GM12878 (cell line): ENCODE measurements at regions of chr15 and their contacts with region 1.

Region 1: DNA sequence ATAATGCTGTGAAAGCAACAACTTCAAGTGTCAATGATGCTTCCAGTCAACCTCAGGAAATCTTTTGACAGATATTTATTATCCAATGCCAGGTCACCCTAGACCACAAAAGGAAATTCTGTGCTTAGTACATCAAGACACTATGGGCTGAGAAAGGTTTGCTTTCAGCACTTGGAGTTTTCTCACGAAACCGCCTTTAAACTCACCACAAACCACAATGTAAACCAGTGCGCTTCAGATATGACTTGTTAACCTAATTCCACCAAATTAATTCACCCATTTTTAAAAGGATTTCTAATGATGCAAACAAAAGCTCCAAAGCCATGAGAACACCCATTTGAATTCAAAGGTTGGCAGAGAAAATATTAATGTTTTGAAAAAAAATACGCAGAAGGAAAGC is 292.9 kb upstream of the NR2F2 start:
- DNase-seq: peak; percentile 93
- ATAC-seq: peak; percentile 73
- H3K4me3 ChIP-seq: no peak overlapping the region
- H3K27ac ChIP-seq: peak overlapping the region; percentile 6; the same call in 1 of the 2 replicates
- H3K4me1 ChIP-seq: peaks cover 37% of the 10 kb centered on the region
- H3K27me3 ChIP-seq: no peaks in the 10 kb centered on the region
- CTCF ChIP-seq: no peak
- EP300 ChIP-seq: peak; percentile 89 to 92
- POLR2A ChIP-seq: no peak
- RAD21 ChIP-seq: peak; percentile 10; the same call in 1 of the 2 replicates

Region 2: DNA sequence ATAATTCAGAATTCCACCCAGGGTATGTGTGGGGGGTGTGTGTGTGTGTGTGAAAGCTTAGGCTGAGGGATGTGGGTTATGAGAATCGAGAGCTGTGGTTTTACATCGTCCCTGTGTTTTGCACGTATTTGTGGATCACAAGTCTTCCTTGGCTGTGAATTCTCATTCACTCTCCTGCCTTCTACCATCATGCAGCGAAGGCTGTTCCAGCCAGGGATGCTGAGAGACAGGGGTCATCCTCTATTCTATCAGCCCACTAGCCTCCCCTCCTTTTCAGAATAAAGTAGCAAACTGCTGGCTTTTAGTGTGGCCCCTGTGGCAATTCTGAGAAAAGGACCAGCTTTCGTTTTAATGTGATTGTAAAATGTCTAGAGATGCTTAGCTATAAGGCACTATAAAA is 167.7 kb before region 1 on chr15:
- CTCF ChIA-PET with region 1: no interaction called
- POLR2A ChIA-PET with region 1: no interaction called
- RAD21 ChIA-PET with region 1: interaction called, 4 read pairs
- SMC1A ChIA-PET with region 1: interaction called, 5 read pairs
- in situ Hi-C with region 1: no loop called
- intact Hi-C with region 1: loop called (anchors 5 kb)
- DNase-seq: no peak
- ATAC-seq: peak; percentile 66
- H3K4me3 ChIP-seq: no peak overlapping the region
- H3K27ac ChIP-seq: no peak overlapping the region
- H3K4me1 ChIP-seq: 0 out of 2 replicates have a peak, but pooled peaks cover 3% of the 10 kb centered on the region
- H3K27me3 ChIP-seq: no peaks in the 10 kb centered on the region
- CTCF ChIP-seq: no peak
- EP300 ChIP-seq: 0 out of 4 replicates have a peak, but pooled peaks of 1 of the 2 experiments have one; percentile 12
- POLR2A ChIP-seq: no peak
- RAD21 ChIP-seq: no peak

Region 3: GRCh38 chr15:95957861-95958260 is 79.7 kb before region 1 on chr15:
- CTCF ChIA-PET with region 1: no interaction called
- POLR2A ChIA-PET with region 1: no interaction called
- RAD21 ChIA-PET with region 1: no interaction called
- SMC1A ChIA-PET with region 1: no interaction called
- in situ Hi-C with region 1: no loop called
- intact Hi-C with region 1: no loop called
- DNase-seq: no peak
- ATAC-seq: no peak
- H3K4me3 ChIP-seq: no peak overlapping the region
- H3K27ac ChIP-seq: no peak overlapping the region
- H3K4me1 ChIP-seq: no peaks in the 10 kb centered on the region
- H3K27me3 ChIP-seq: no peaks in the 10 kb centered on the region
- CTCF ChIP-seq: no peak
- EP300 ChIP-seq: no peak
- POLR2A ChIP-seq: no peak
- RAD21 ChIP-seq: no peak

Region 4: DNA sequence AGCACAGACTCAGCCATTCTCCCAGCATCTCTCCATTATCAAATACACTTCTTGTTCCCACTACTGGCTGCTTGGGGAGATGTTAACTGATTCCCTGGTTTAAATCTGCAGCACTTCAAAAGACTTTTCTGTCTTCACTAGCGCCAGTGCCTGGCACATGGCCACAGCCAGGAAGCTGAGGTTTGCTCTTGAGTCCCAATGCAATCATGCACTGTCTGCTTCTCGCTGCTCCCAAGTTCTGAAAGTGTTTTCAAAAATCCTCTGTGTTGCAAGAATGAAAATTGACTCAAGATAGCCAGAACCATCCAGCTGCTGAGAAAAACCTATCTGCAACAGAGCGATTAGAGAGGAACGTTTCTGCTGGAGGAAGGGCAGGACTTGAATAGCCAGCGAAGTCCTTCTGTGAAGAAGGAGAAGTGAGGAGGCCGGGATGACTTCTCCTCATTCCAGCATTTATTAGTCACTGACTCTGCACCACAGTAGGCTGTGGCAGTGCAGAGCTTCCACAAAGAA is 65.5 kb before region 1 on chr15:
- CTCF ChIA-PET with region 1: interaction called, 3 read pairs
- POLR2A ChIA-PET with region 1: interaction called, 4 read pairs
- RAD21 ChIA-PET with region 1: interaction called, 8 read pairs
- SMC1A ChIA-PET with region 1: interaction called, 21 read pairs
- in situ Hi-C with region 1: no loop called
- intact Hi-C with region 1: loop called (anchors 2 kb)
- DNase-seq: no peak
- ATAC-seq: no peak
- H3K4me3 ChIP-seq: no peak overlapping the region
- H3K27ac ChIP-seq: no peak overlapping the region
- H3K4me1 ChIP-seq: peaks cover 32% of the 10 kb centered on the region
- H3K27me3 ChIP-seq: no peaks in the 10 kb centered on the region
- CTCF ChIP-seq: no peak
- EP300 ChIP-seq: no peak
- POLR2A ChIP-seq: no peak
- RAD21 ChIP-seq: no peak

Region 5: DNA sequence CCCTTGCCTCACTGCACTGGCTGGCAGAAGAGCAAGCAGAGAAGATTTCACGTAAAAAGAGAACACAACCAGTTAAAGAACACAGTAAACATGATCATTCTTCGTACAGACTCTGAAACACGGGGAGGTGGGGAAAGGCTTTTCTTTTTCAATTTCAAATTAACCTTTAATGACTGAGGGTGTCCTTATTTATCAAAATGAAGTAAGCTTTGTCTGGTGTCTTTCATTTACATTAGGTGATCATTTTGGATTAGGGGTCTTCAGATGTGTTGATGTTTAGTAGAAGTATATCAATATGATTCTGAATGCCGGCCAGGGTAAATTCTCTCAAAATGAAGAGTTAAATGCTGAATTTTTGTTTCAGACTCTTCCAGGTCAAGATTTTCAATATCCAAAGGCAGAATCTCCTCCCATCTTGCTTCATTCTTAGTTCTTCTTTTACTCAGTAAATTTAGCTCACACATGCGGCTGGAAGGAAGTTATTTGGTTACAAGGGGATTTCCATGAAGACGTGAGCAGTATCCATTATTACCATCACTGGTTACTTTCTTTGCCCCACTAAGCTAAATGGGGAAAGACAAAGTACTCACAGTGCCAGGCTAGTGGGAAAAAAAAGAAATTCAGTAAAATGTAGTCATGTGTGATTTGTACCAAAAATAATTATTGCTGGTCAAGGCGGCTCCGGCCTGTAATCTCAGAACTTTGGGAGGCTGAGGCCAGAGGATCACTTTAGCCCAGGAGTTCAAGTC is 20.7 kb after region 1 on chr15:
- CTCF ChIA-PET with region 1: interaction called, 7 read pairs
- POLR2A ChIA-PET with region 1: interaction called, 10 read pairs
- RAD21 ChIA-PET with region 1: interaction called, 22 read pairs
- SMC1A ChIA-PET with region 1: interaction called, 19 read pairs
- in situ Hi-C with region 1: no loop called
- intact Hi-C with region 1: loop called (anchors 1 kb)
- DNase-seq: peak; percentile 89
- ATAC-seq: peak; percentile 93
- H3K4me3 ChIP-seq: no peak overlapping the region
- H3K27ac ChIP-seq: peak overlapping the region; percentile 88
- H3K4me1 ChIP-seq: peaks cover 26% of the 10 kb centered on the region
- H3K27me3 ChIP-seq: no peaks in the 10 kb centered on the region
- CTCF ChIP-seq: no peak
- EP300 ChIP-seq: peak; percentile 85 to 87; a peak in 2 of 4 replicates
- POLR2A ChIP-seq: no peak
- RAD21 ChIP-seq: 0 out of 2 replicates have a peak, but pooled peaks have one; percentile 3